Astrocyte of the cerebellum (primary cell): ENCODE measurements at regions of chr7 and their contacts with region 1.

Region 1: GRCh38 chr7:108684629-108685028 is 115.0 kb downstream of the DNAJB9 start:
- DNase-seq: no peak
- H3K4me3 ChIP-seq: no peak overlapping the region
- CTCF ChIP-seq: no peak

Region 2: GRCh38 chr7:108592646-108593201 is 91.9 kb before region 1 on chr7:
- in situ Hi-C with region 1: no loop called
- DNase-seq: no peak
- H3K4me3 ChIP-seq: no peak overlapping the region
- CTCF ChIP-seq: peak; percentile 58

Region 3: DNA sequence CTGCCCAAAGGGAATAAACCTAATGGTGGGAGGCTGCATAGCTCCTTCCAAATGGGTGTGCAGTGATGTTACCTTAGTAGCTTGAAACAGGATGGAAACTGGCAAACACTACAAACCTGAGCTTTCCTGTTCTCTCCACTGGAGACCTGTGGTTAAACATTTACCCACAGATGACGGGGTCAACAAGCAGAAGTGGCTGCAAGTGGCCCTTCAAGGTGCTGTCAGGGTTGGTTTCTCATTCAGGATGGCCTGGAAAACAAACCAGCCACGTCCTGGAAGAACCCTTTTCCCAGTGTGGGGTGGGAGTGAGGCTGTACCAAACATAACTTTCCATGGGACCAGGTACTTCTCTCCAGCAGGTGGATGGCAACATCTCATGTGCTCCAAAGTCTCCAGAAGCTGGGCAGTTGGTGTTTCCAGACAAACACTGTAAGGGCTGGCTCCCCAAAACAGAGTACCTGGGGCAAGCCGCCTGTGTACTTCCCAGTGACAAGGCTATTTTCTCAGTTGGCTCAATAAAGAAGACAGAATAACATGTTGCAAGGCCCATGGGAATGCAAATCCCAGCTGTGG is 47.5 kb before region 1 on chr7:
- in situ Hi-C with region 1: loop called (anchors 5 kb)
- DNase-seq: no peak
- H3K4me3 ChIP-seq: no peak overlapping the region
- CTCF ChIP-seq: no peak